ENCODE measurements at regions of chr12 and their contacts with region 1.

Region 1: DNA sequence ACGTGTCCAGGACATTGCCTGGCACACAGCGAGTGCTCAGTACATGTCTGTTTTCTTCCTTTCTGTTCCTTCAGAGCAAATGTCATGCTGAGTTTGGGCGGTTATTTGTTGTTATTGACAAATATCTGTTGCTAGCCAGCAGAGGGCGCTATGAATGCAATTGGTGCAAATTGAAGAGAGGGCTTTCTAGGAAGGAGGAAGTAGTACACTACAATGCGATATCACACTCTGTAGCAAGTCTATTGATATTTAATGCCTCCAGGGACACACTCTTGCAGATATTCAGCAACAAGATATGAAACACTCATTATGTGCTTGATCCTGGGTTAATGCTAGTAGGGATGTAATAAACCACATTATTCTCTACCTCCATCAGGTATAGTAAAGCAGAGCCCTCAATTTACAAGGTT is 267.3 kb upstream of the SRRM4 start:
- DNase-seq: peak; percentile 11
- ATAC-seq: peak; percentile 77
- H3K4me3 ChIP-seq: no peak overlapping the region
- H3K27ac ChIP-seq: no peak overlapping the region
- H3K4me1 ChIP-seq: no peaks in the 10 kb centered on the region
- H3K27me3 ChIP-seq: no peaks in the 10 kb centered on the region
- CTCF ChIP-seq: peak; percentile 55 to 76 (median 61)
- EP300 ChIP-seq: no peak
- POLR2A ChIP-seq: no peak
- RAD21 ChIP-seq: peak; percentile 59

Region 2: GRCh38 chr12:118727196-118727978 is 13.3 kb after region 1 on chr12:
- CTCF ChIA-PET with region 1: interaction called, 13 read pairs
- POLR2A ChIA-PET with region 1: no interaction called
- RAD21 ChIA-PET with region 1: no interaction called
- SMC1A ChIA-PET with region 1: no interaction called
- in situ Hi-C with region 1: no loop called
- intact Hi-C with region 1: no loop called
- DNase-seq: no peak
- ATAC-seq: no peak
- H3K4me3 ChIP-seq: no peak overlapping the region
- H3K27ac ChIP-seq: no peak overlapping the region
- H3K4me1 ChIP-seq: no peaks in the 10 kb centered on the region
- H3K27me3 ChIP-seq: no peaks in the 10 kb centered on the region
- CTCF ChIP-seq: no peak
- EP300 ChIP-seq: no peak
- POLR2A ChIP-seq: no peak
- RAD21 ChIP-seq: no peak

Region 3: DNA sequence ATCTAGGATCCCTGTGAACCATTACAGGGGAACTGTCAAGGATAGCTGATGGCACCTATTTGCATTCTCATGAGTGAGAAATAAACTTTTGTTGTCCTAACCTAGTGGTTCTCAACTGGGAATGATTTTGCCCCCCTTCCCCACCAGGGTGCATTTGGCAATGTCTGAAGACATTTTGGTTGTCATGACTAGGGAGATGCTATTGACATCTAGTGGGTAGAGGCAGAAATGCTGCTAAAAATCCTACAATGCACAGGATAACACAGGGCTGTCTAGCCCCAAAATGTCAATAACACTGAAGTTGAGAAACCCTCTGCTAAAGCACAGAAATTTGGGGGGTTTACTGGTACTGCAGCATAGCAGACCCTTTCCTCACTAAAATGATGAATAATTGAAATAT is 126.3 kb after region 1 on chr12:
- CTCF ChIA-PET with region 1: no interaction called
- POLR2A ChIA-PET with region 1: no interaction called
- RAD21 ChIA-PET with region 1: no interaction called
- SMC1A ChIA-PET with region 1: no interaction called
- in situ Hi-C with region 1: no loop called
- intact Hi-C with region 1: loop called (anchors 10 kb)
- DNase-seq: no peak
- ATAC-seq: peak; percentile 58; the same call in 2 of the 3 replicates
- H3K4me3 ChIP-seq: no peak overlapping the region
- H3K27ac ChIP-seq: no peak overlapping the region
- H3K4me1 ChIP-seq: no peaks in the 10 kb centered on the region
- H3K27me3 ChIP-seq: no peaks in the 10 kb centered on the region
- CTCF ChIP-seq: peak; percentile 31 to 55 (median 45); a peak in 4 of 6 replicates
- EP300 ChIP-seq: no peak
- POLR2A ChIP-seq: no peak
- RAD21 ChIP-seq: peak; percentile 60

Measured in GM12878 (cell line).